MCF 10A (cell line): ENCODE measurements at regions of chr4 and their contacts with region 1.

Region 1: GRCh38 chr4:110087070-110087708 is 111.2 kb downstream of the ELOVL6 start:
- DNase-seq: peak; percentile 81
- H3K4me3 Mint-ChIP-seq: no peak overlapping the region
- H3K27ac Mint-ChIP-seq: peak overlapping the region; percentile 61
- H3K4me1 Mint-ChIP-seq: peaks cover 36% of the 10 kb centered on the region
- H3K27me3 Mint-ChIP-seq: no peaks in the 10 kb centered on the region
- CTCF ChIP-seq: no peak

Region 2: DNA sequence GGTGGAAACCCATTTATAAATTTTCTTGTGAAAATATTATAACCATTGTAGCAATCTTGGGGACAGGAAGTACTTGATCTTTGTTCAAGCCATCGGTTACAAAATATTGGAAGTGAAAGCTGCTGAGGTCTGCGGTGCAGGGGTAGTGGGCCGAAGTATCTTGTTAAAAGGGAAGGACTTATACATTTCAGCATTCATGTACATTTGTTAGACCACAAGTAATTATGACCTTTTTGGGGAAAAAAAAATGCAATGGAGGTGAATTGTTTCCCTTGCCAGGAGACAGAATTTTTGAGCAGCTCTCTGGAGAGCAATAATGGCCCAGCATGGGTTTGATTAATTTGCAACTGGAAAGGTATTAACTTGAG is 53.2 kb before region 1 on chr4:
- CTCF ChIA-PET with region 1: no interaction called
- POLR2A ChIA-PET with region 1: no interaction called
- intact Hi-C with region 1: no loop called
- DNase-seq: no peak
- H3K4me3 Mint-ChIP-seq: no peak overlapping the region
- H3K27ac Mint-ChIP-seq: no peak overlapping the region
- H3K4me1 Mint-ChIP-seq: no peaks in the 10 kb centered on the region
- H3K27me3 Mint-ChIP-seq: no peaks in the 10 kb centered on the region
- CTCF ChIP-seq: no peak

Region 3: GRCh38 chr4:110075083-110075738 is 12.0 kb before region 1 on chr4:
- CTCF ChIA-PET with region 1: no interaction called
- POLR2A ChIA-PET with region 1: no interaction called
- intact Hi-C with region 1: no loop called
- DNase-seq: no peak
- H3K4me3 Mint-ChIP-seq: no peak overlapping the region
- H3K27ac Mint-ChIP-seq: no peak overlapping the region
- H3K4me1 Mint-ChIP-seq: no peaks in the 10 kb centered on the region
- H3K27me3 Mint-ChIP-seq: no peaks in the 10 kb centered on the region
- CTCF ChIP-seq: no peak

Region 4: DNA sequence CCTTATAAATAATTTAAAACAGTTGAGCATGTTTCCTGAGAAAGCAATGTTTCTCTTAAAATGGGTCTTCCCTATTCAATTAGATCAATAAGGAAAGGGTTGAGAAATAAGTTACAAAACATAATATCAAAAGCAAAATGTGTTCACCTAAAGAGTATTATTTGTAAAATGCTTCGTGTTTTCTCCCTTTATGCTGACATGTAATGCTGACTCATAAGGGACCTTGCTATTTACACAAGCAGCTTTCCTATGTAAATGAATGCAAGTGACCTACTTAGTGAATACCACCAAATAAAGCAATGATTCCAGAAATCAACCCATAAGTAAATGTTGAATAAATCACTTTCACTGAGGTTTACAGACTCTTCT is 19.7 kb after region 1 on chr4:
- CTCF ChIA-PET with region 1: no interaction called
- POLR2A ChIA-PET with region 1: interaction called, 10 read pairs
- intact Hi-C with region 1: no loop called
- DNase-seq: peak; percentile 54
- H3K4me3 Mint-ChIP-seq: no peak overlapping the region
- H3K27ac Mint-ChIP-seq: peak overlapping the region; percentile 54
- H3K4me1 Mint-ChIP-seq: peaks cover 14% of the 10 kb centered on the region
- H3K27me3 Mint-ChIP-seq: no peaks in the 10 kb centered on the region
- CTCF ChIP-seq: no peak